ENCODE measurements at regions of chr7 and their contacts with region 1.

Region 1: DNA sequence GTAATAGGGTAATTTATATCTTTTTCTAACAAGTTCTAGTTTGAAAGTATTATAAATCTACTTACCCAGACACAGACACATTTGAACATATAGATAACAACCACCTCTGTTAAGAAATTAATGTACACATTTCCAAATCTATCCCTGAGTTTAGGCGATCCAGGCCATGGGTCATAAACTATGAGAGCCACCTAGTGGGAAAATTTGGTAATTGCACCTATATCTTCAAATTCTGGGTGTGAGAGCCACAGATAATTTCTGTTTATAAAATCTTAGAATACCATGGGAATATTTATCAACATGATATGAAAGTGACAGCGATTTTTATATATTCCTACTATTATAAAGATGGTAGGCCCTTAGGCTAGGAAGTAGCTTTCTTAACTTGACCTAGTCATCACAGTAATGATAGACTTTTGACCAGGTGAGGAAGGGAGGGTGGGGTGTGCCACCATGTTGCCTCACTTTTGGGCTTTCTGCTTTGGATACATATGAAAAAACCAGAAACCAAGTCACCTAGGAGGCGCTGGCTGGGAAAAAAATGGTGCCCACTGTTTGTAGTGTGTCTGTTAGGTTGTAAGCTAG is 8.0 kb upstream of the EPHA1 start:
- DNase-seq: no peak
- ATAC-seq: peak; percentile 82
- H3K4me3 ChIP-seq: no peak overlapping the region
- H3K27ac ChIP-seq: no peak overlapping the region
- H3K4me1 ChIP-seq: no peaks in the 10 kb centered on the region
- H3K27me3 ChIP-seq: no peaks in the 10 kb centered on the region
- CTCF ChIP-seq: peak; percentile 61 to 77 (median 62)
- EP300 ChIP-seq: no peak
- POLR2A ChIP-seq: no peak
- RAD21 ChIP-seq: peak; percentile 81

Region 2: DNA sequence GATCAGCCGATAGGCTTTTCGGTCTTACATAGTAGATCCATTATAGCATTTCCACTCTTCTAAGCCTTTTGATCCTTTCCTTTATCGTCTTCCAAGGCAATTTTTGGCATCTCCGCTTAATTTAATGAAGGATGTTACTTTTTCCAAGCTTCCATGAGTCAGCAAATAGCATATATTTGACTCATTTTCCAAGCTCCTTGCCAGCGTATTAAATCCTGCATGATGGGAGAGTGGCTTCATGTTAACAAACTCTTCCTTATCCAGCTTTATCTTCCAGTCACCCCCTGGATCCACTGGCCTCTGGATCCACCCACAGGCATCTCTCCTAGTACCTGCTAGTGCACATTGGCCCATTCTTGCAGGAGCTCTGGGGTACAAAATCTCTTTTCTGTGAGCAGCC is 402.8 kb before region 1 on chr7:
- CTCF ChIA-PET with region 1: no interaction called
- POLR2A ChIA-PET with region 1: no interaction called
- RAD21 ChIA-PET with region 1: no interaction called
- SMC1A ChIA-PET with region 1: no interaction called
- in situ Hi-C with region 1: loop called (anchors 10 kb)
- intact Hi-C with region 1: loop called (anchors 10 kb)
- DNase-seq: no peak
- ATAC-seq: no peak
- H3K4me3 ChIP-seq: no peak overlapping the region
- H3K27ac ChIP-seq: no peak overlapping the region
- H3K4me1 ChIP-seq: peaks cover 10% of the 10 kb centered on the region
- H3K27me3 ChIP-seq: peaks cover 0 to 3% of the 10 kb centered on the region in 2 experiments; a peak in 1 of 4 replicates
- CTCF ChIP-seq: no peak
- EP300 ChIP-seq: no peak
- POLR2A ChIP-seq: no peak
- RAD21 ChIP-seq: no peak

Region 3: DNA sequence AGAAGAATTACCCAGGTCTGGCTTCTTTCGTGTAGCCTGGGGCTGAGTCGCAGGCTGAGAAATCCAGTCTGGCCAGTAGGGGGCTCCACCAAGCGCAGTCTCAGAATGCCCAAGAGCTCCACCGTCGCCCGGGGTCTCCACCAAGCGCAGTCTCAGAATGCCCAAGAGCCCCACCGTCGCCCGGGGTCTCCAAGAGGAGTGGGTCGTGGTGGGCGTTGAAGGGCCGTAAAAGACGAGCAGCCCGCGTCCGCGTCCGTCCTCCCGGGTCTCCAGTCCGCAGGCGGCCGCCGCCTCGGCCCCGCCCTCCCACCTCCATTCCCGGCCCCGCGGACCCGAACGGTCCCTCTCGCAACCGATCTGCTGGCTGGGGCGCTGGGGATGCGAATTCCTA is 36.4 kb before region 1 on chr7:
- CTCF ChIA-PET with region 1: interaction called, 33 read pairs
- POLR2A ChIA-PET with region 1: no interaction called
- RAD21 ChIA-PET with region 1: interaction called, 8 read pairs
- SMC1A ChIA-PET with region 1: interaction called, 14 read pairs
- in situ Hi-C with region 1: no loop called
- intact Hi-C with region 1: loop called (anchors 1 kb)
- DNase-seq: peak; percentile 46
- ATAC-seq: peak; percentile 76
- H3K4me3 ChIP-seq: peak overlapping the region; percentile 99
- H3K27ac ChIP-seq: peak overlapping the region; percentile 92
- H3K4me1 ChIP-seq: peaks cover 15% of the 10 kb centered on the region
- H3K27me3 ChIP-seq: no peaks in the 10 kb centered on the region
- CTCF ChIP-seq: peak; percentile 78 to 89 (median 85)
- EP300 ChIP-seq: no peak
- POLR2A ChIP-seq: no peak
- RAD21 ChIP-seq: peak; percentile 43

Region 4: DNA sequence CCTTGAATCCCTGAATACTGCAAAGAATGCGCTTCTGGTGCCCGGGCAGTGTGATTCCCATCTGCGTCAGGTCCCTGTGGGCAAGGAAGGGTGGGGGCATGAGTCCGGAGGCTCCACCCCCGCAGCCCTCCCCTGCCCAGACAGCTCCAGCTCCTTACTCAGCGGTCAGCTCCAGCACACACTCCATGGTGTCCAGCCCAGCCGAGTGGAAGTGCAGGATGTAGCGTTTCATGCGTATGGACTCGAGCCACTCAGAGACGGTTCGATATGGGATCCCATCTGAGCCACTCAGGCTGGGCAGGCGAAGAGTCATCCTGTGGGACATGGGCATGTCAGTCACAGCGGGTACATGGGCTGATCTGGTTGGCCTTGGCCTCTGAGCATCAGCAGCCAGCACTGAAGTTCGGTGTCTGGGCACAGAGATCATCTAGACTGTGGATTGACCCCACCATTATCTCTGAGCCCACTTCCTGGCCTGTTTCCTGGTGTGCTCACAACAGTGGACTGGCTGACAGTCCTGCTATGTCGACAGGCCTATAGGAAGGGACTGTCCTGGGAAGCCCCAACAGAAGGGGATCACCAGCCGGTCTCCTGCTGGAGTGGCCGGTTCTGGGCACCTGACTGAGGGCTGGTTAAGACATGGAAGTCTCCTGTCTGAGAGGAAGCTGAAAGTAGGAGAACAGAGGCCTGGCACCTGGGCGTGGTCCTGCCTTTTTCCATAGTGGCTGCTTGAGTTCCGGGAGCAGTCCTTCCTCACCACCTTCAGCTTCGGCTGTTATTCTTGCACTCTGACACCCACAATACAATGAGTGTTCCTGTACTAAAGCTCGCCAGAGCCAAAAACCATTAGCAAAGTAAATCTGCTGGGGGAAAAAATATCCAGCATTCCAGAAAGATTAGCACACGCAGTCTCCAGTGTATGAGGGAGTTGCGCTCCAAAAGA is 24.9 kb before region 1 on chr7:
- CTCF ChIA-PET with region 1: interaction called, 10 read pairs
- POLR2A ChIA-PET with region 1: no interaction called
- RAD21 ChIA-PET with region 1: no interaction called
- SMC1A ChIA-PET with region 1: no interaction called
- in situ Hi-C with region 1: no loop called
- intact Hi-C with region 1: no loop called
- DNase-seq: no peak
- ATAC-seq: no peak
- H3K4me3 ChIP-seq: no peak overlapping the region
- H3K27ac ChIP-seq: no peak overlapping the region
- H3K4me1 ChIP-seq: no peaks in the 10 kb centered on the region
- H3K27me3 ChIP-seq: no peaks in the 10 kb centered on the region
- CTCF ChIP-seq: no peak
- EP300 ChIP-seq: no peak
- POLR2A ChIP-seq: no peak; the same call in 1 of the 2 replicates
- RAD21 ChIP-seq: no peak

Region 5: DNA sequence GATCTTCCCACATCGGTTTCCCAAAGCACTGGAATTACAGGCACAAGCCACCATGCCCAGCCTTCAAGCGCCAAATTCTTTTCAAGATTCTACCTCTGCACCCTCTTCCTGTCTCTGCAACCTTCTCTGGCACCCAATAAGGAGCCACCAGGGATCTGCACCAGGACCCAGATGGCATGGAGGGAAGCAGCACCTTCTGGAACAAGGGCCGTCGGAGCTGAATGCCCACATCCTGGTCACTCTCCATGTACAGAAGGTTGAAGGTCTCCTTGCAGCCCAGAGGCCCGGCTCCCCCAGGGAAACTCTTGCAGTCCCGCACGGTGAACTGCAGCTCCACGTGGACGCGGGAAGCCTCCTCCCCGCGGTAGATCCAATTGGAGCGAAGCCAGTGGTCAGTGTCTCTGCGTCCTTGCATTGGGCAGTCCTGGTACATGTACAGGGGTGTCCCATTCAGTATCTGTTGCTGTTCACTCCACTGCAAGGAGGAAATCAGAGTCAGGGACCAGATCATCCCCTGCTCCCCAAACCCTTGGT is 15.5 kb before region 1 on chr7:
- CTCF ChIA-PET with region 1: interaction called, 27 read pairs
- POLR2A ChIA-PET with region 1: no interaction called
- RAD21 ChIA-PET with region 1: interaction called, 3 read pairs
- SMC1A ChIA-PET with region 1: interaction called, 11 read pairs
- in situ Hi-C with region 1: no loop called
- intact Hi-C with region 1: no loop called
- DNase-seq: no peak
- ATAC-seq: no peak
- H3K4me3 ChIP-seq: no peak overlapping the region
- H3K27ac ChIP-seq: no peak overlapping the region
- H3K4me1 ChIP-seq: no peaks in the 10 kb centered on the region
- H3K27me3 ChIP-seq: peaks cover 0 to under 1% of the 10 kb centered on the region in 2 experiments; a peak in 2 of 4 replicates
- CTCF ChIP-seq: no peak
- EP300 ChIP-seq: no peak
- POLR2A ChIP-seq: no peak
- RAD21 ChIP-seq: no peak

Region 6: GRCh38 chr7:143447466-143447865 is 30.8 kb after region 1 on chr7:
- CTCF ChIA-PET with region 1: no interaction called
- POLR2A ChIA-PET with region 1: no interaction called
- RAD21 ChIA-PET with region 1: no interaction called
- SMC1A ChIA-PET with region 1: no interaction called
- in situ Hi-C with region 1: no loop called
- intact Hi-C with region 1: no loop called
- DNase-seq: no peak
- ATAC-seq: no peak
- H3K4me3 ChIP-seq: no peak overlapping the region
- H3K27ac ChIP-seq: no peak overlapping the region
- H3K4me1 ChIP-seq: no peaks in the 10 kb centered on the region
- H3K27me3 ChIP-seq: peaks cover 0 to 3% of the 10 kb centered on the region in 2 experiments; a peak in 2 of 4 replicates
- CTCF ChIP-seq: no peak
- EP300 ChIP-seq: no peak
- POLR2A ChIP-seq: no peak
- RAD21 ChIP-seq: no peak

Measured in GM12878 (cell line).